ENCODE measurements at regions of chr7 and their contacts with region 1.

Region 1: DNA sequence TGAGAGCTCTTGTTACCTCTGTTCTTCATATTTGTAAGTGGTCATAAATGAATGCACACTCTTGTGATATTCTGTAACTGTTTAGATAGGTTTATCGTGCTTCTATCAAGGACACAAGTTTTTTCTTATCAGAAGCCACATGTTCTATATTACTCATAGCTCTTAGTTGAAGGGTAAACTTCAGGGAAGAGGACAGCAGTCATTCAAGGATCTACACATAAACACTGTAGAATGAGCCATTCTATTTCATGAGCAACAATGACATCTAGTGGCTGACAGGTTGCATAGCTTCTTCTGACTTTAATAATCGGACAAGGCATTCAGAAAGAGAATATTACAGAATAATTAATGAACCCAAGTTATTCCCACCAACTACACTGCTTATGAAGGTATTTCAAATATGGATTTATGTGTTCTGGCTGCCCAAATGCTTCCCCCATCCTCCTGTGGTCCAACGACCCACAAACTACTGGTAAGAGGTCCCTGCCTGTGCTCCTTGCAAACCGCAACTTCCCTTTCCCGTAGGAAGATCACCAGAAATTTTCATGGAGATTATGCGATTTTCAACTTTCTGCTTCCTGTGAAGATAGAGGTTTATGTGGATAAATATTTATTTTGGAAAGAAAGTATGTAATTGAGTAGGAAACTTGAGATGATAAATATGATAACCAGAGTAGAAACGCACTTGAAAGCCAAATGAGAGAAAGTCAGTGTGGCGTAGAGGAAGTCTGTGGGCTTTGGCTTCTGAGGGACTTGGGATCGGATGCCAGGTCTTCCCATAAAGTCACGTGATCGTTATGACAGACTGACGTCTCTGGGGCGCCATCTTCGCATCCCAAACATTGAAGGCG is 16.8 kb upstream of the ABCB5 start:
- H3K4me3 ChIP-seq: no peak overlapping the region
- H3K27ac ChIP-seq: no peak overlapping the region
- H3K4me1 ChIP-seq: no peaks in the 10 kb centered on the region
- CTCF ChIP-seq: peak; percentile 41; the same call in 1 of the 2 replicates

Region 2: DNA sequence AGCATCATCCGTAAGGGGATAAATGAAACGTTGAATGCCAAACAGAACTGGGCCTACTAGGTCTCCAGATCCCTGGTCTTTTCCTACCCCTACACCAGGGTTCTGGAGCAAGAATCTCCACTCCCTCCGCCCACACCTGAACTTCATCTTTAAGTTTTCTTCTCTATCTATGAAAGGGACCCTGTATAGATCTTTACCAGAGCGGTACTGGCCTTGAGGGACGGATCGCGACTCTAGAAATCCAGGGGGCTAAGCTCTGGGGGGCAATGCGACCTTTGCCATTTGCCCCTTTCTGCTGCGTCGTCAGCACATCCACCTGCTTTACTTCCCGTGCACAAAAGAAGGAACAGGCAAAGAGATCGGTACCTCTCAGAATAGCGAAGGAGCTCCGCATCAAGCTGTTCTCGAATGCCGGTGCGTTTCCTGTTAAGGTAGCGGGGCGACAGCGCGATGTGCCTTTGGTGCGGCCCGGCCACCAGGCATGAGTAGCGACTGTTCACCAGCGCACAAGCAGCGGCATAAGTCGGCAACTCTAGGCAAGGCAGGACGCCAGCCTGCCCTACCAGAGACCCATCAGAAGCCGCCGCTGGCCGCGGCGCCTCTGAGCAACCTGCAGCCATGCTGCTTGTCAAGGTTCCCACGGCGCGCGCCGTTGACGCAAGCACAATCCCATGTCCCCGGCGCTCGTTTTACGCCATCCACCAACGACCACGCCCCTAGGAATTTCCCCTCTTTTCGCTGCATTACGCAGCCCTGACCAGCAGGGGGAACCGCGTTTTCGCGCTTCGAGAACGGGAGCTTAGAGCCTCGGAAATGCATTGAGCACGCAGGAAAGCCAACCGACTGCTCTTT is 890.1 kb before region 1 on chr7 and contains the start of gene POLR1F:
- CTCF ChIA-PET with region 1: interaction called, 62 read pairs
- POLR2A ChIA-PET with region 1: no interaction called
- H3K4me3 ChIP-seq: peak within 1 kb of the TSS; percentile 93
- H3K27ac ChIP-seq: peak within 1 kb of the TSS; percentile 32; the same call in 1 of the 2 replicates
- H3K4me1 ChIP-seq: peaks cover 9% of the 10 kb centered on the region; the same call in 1 of the 2 replicates
- CTCF ChIP-seq: peak; percentile 83

Region 3: GRCh38 chr7:19713676-19714075 is 885.0 kb before region 1 on chr7:
- CTCF ChIA-PET with region 1: interaction called, 62 read pairs
- POLR2A ChIA-PET with region 1: no interaction called
- H3K4me3 ChIP-seq: no peak overlapping the region
- H3K27ac ChIP-seq: no peak overlapping the region
- H3K4me1 ChIP-seq: no peaks in the 10 kb centered on the region
- CTCF ChIP-seq: no peak

Region 4: GRCh38 chr7:19747740-19748339 is 850.8 kb before region 1 on chr7:
- CTCF ChIA-PET with region 1: interaction called, 24 read pairs
- POLR2A ChIA-PET with region 1: no interaction called
- H3K4me3 ChIP-seq: no peak overlapping the region
- H3K27ac ChIP-seq: no peak overlapping the region
- H3K4me1 ChIP-seq: no peaks in the 10 kb centered on the region
- CTCF ChIP-seq: no peak

Region 5: GRCh38 chr7:19754521-19755116 is 844.1 kb before region 1 on chr7:
- CTCF ChIA-PET with region 1: interaction called, 15 read pairs
- POLR2A ChIA-PET with region 1: no interaction called
- H3K4me3 ChIP-seq: no peak overlapping the region
- H3K27ac ChIP-seq: no peak overlapping the region
- H3K4me1 ChIP-seq: no peaks in the 10 kb centered on the region
- CTCF ChIP-seq: no peak

Region 6: DNA sequence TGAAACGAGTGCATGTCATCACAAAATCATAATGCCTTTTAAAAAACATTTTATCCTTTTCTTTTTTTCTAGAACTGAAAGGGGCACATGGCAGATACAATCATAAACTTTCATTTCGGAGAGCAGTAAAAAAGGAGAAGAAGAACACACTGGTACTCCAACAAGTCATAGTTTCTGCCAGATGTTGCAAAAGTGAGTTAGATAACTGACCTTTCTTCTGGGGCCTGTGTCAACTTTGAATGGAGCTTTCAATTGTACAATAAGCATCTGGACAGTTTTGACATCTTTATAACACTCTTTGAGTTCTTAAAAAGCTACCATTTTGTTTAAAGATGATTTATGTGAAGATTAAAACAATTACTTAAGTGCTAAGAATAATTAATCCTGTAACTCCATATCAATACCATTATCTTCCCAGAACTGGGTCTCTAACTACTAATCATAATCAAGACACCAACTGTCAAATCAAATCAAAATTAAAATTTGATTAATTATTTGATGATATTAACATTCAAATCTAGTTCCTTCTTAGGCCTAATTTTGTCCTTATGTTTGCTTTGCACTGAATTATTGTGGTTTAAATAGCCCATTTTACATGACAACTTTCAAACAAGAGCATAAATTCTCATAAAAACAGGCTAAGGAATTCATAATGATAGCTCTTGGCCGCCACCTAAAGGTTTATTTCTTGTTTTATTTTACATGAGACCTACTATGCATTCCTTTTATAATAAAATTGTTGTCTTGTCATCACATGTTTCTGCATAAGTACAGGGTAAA is 287.5 kb before region 1 on chr7:
- CTCF ChIA-PET with region 1: interaction called, 12 read pairs
- POLR2A ChIA-PET with region 1: no interaction called
- H3K4me3 ChIP-seq: no peak overlapping the region
- H3K27ac ChIP-seq: no peak overlapping the region
- H3K4me1 ChIP-seq: no peaks in the 10 kb centered on the region; the same call in 1 of the 2 replicates
- CTCF ChIP-seq: no peak

Region 7: GRCh38 chr7:20330240-20330927 is 268.3 kb before region 1 on chr7 and contains the start of gene ITGB8:
- CTCF ChIA-PET with region 1: interaction called, 13 read pairs
- POLR2A ChIA-PET with region 1: no interaction called
- H3K4me3 ChIP-seq: peak within 1 kb of the TSS; percentile 56
- H3K27ac ChIP-seq: peak within 1 kb of the TSS; percentile 73
- H3K4me1 ChIP-seq: peaks cover 4% of the 10 kb centered on the region; the same call in 1 of the 2 replicates
- CTCF ChIP-seq: no peak

Region 8: GRCh38 chr7:20624666-20625385 is 26.1 kb after region 1 on chr7:
- CTCF ChIA-PET with region 1: no interaction called
- POLR2A ChIA-PET with region 1: no interaction called
- H3K4me3 ChIP-seq: no peak overlapping the region
- H3K27ac ChIP-seq: no peak overlapping the region
- H3K4me1 ChIP-seq: no peaks in the 10 kb centered on the region
- CTCF ChIP-seq: no peak

Region 9: DNA sequence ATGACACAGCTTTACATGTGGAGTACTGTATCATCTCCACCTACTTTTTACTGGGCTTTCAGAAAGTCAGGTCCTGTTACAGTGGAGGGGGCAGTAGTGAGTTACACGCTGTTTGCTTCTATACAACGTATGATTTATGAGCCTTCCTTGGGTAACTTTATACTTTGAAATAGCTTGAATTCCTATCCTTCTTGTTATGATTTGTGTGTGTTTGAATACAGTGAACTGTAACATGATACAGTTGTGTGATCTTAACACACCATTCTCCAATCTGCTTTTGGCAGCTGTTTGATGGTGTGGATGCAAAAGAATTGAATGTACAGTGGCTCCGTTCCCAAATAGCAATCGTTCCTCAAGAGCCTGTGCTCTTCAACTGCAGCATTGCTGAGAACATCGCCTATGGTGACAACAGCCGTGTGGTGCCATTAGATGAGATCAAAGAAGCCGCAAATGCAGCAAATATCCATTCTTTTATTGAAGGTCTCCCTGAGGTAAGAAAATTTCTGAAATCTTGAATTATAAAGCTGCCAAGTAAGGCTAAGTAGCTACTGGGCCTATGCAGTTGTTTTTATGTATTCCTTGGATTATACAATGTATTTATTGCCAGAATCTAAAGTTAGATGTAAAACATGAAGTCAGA is 146.4 kb after region 1 on chr7:
- CTCF ChIA-PET with region 1: no interaction called
- POLR2A ChIA-PET with region 1: no interaction called
- H3K4me3 ChIP-seq: no peak overlapping the region
- H3K27ac ChIP-seq: no peak overlapping the region
- H3K4me1 ChIP-seq: peaks cover 9% of the 10 kb centered on the region
- CTCF ChIP-seq: no peak